ENCODE measurements at regions of chr15 and their contacts with region 1.

Region 1: DNA sequence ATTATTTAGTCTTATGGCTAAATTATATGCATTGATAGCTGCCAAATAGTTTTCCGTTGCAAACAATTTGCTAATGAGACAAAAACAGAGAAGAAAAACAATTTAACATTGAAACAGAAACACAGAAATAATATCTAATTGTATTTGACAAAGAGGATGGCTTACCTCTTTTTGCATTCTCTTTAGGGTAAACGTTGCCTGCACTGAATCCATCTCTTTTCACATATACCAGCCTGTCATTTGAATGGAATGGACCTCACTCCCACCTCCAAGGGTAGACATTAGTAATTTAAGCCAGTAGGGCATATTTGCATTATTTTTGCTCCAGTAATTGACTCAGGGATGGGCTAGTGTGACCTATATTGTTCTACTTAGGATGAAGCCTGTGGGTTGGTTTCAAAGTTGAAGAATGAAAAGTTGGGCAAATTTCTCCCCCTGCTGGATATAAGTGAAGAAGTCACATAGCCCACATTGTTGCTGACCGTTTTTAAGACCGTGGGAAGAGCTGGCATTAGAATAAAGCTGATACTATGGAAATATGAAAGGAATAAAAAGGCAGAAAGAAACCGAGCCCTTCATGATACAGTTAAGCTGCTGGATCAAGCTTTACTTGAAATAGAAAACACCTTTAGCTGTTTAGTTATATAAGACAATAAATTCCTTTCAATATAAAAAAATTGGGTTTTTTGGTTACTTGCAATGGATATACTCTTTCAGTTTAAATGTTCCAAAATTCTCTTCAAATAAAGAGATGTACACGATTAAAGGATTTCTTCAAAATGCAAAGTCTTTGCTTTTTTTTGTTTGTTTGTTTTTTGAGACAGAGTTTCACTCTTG is 26.9 kb downstream of the PIERCE2 start:
- DNase-seq: peak; percentile 7
- H3K4me3 ChIP-seq: no peak overlapping the region
- CTCF ChIP-seq: peak; percentile 53

Region 2: DNA sequence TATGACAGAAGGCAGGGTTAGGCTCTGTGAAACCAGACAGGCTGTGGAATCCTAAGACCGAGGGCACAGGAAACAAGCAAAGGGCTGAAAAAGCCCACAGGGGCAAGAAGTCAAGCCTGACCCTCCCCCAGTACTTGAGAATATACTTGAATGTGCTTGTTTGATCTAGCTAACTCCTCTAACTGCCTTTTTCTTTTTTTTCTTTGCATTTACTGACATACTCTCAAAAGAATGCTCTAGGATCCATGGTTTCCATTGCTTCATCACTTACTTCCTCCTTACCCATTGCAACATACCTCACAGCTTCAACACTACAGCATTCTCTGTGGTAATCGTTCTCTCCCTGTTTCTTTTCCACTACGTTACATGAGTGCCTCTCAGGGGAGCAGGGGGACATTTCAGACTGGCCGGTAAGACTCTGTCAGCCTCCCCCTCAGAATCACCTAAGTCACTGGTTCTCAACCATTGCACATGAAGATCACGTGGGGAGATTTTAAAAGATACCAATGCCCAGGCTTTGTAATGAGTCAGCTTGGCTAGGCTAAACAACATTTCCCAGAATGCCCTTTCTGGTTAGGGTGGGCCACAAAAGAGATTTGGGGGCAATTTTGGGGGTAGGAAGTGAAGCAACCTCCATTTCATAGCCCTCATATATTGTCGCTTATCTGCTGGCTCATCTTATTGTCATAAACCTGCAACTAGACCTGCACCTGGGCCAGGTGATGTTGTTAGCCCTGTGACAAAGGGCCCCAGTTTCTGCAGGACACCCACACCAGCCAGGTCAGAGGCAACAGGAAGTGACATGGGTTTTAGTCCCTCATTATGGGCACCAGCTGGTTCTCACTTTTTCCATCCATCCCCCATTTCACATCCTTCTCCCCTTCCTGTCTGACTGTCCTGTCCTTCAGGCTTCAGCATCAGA is 213.9 kb before region 1 on chr15:
- CTCF ChIA-PET with region 1: interaction called, 177 read pairs
- POLR2A ChIA-PET with region 1: no interaction called
- DNase-seq: peak; percentile 86
- H3K4me3 ChIP-seq: no peak overlapping the region
- CTCF ChIP-seq: no peak

Region 3: DNA sequence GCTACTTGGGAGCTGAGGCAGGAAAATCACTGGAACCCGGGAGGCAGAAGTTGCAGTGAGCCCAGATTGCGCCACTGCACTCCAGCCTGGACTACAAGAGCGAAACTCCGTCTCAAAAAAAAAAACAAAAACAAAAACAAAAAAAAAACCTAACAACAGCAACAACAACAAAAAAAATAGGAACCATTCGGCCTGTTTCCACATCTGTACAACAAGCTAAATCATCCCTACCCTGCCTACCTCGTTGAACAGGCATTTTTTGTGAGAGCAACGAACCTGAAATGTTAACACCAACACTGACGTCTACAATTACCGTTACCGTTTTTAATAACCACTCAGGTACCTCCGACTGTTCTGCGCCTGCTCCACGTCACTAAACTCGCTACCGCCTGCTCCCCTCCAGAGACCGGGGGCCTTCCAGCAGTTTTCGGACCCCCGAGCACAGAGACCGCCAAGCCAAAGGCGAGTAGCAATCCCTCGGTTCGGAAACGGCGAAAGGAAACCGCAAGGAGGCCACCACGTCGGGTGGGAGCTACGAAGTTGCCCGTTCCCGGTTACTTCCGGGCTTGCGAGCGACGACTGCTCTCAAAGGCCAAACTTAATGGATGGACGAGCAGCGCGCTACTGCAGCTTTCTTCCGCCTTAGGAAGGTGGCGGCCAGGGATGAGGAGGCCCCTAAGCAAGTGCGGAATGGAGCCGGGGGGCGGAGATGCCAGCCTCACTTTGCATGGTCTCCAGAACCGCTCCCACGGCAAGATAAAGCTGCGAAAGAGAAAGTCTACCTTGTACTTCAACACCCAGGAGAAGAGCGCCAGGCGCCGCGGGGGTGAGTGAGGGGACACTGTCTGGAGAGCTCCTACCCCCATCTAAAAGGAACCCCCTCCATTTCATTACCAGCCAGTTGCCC is 116.4 kb before region 1 on chr15 and contains the starts of genes PIGB and PIGBOS1:
- CTCF ChIA-PET with region 1: interaction called, 12 read pairs
- POLR2A ChIA-PET with region 1: no interaction called
- DNase-seq: peak; percentile 45
- H3K4me3 ChIP-seq: peak within 1 kb of the TSS; percentile 93
- CTCF ChIP-seq: no peak

Region 4: DNA sequence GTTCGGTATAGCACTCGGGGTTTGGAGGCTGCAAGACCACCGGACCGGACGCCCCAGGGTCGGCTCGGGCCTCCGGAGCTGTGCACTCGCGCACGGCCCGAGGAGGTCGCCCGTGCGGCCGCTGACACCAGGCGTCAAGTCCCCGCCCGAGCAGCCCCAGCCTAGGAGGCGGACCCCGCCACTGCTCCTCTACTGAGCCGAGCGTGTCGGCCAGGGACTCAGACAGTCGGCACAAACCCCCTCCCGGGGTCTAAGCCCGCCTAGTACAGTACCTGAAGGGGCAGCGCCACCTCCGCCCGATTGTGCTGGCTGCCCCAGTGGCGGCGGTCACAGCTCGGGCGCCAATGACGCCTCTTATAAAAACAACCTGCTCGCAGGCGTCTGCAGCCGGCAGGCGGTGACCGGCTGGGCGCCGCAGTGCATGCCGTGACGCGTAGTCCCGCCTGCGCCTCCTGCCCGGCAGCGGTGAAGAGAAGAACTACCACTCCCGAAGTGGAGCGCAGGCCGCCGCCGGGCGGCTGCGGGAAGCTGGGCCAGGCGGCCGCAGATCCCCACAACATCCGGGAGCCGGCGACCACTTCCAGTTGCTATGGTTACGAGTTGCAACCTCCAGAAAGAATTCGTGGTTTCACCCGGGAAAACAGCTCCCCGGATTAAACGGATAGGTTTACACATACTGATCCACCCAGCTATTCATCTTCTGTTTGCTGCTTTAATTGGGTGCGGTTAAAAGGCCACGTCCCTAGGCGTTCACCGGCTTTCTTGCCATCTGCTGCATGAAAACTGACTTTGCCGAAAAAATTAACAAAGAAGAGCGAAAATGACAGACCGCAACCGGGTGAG is 27.0 kb before region 1 on chr15 and contains the starts of genes CCPG1 and PIERCE2:
- CTCF ChIA-PET with region 1: interaction called, 26 read pairs
- POLR2A ChIA-PET with region 1: interaction called, 3 read pairs
- DNase-seq: peak; percentile 58
- H3K4me3 ChIP-seq: peak within 1 kb of the TSS; percentile 89
- CTCF ChIP-seq: peak; percentile 85

Region 5: DNA sequence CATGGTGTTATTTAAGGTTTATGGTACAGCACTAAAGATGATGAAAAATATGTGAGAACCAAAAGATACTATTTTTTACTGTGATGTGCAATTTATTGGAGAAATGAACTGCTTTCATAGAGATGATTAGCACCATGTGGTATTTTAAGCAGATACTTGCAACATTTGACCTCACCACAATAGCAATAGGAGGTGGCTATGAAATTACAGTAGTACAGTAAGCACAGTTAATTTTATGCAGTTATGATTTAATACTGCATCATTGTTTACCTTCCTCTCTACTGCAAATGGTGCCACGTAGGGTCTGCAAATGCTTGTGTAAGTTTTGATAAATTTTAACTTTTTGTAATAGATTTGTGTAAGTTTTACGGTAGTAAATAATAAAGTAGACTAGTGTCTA is 138.9 kb after region 1 on chr15:
- CTCF ChIA-PET with region 1: no interaction called
- POLR2A ChIA-PET with region 1: no interaction called
- DNase-seq: no peak
- H3K4me3 ChIP-seq: no peak overlapping the region
- CTCF ChIP-seq: no peak

Region 6: DNA sequence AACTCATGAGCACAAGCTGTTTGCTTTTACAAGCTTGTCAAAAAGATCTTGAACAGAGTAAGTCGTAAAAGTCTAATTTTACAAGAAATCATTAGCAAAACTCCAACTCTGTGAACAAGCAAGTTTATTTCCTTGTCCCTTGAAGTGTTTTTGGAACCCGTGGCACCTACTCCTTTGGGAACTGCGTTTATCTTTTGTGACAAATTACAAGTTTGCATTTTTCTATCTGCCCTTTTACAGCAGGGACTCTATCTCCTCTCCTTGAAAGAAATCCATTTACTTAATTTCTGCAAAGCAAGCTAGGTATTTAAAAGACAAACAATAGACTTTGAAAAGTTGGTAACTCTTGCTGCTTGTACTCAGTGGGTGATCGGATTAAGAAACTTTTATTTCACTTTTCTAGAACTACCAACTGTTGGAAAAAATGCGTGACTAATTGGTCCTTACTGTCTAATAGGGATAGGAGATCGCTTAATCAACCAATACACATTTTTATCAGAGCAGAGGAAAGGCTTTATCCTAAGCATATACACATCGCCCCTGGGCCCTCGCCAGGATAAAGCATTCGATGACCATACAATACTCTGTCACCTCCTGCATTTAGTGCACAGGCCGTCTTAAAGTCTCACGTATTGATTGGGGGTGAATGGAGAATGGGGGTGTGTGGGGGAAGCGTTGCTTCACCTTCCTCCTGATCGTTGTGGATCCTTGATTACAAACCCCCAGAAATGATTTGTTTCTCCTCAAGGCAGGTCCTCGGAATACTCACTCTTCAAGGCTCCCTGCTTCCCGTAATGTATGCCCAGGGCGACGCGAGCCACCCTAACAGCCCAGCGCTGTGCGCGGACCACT is 306.0 kb after region 1 on chr15:
- CTCF ChIA-PET with region 1: no interaction called
- POLR2A ChIA-PET with region 1: no interaction called
- DNase-seq: no peak
- H3K4me3 ChIP-seq: no peak overlapping the region
- CTCF ChIP-seq: no peak